Uterus (tissue), 4 donors: ENCODE measurements at regions of chr19 and their contacts with region 1.

Region 1: GRCh38 chr19:2977001-2977685 is at the start of gene TLE6:
- DNase-seq: peak; percentile 95 to 96
- H3K4me3 ChIP-seq: peak within 1 kb of the TSS; percentile 25 to 34
- H3K27ac ChIP-seq: peak within 1 kb of the TSS; percentile 20 to 67
- H3K4me1 ChIP-seq: peaks cover 16 to 26% of the 10 kb centered on the region in 2 donors
- H3K27me3 ChIP-seq: no peaks in the 10 kb centered on the region
- CTCF ChIP-seq: no peak
- POLR2A ChIP-seq: no peak
- total RNA-seq, gene TLE6: 0.46 to 3.5 (median 1.1) TPM in 3 of 4 donors, not detected in the other

Region 2: DNA sequence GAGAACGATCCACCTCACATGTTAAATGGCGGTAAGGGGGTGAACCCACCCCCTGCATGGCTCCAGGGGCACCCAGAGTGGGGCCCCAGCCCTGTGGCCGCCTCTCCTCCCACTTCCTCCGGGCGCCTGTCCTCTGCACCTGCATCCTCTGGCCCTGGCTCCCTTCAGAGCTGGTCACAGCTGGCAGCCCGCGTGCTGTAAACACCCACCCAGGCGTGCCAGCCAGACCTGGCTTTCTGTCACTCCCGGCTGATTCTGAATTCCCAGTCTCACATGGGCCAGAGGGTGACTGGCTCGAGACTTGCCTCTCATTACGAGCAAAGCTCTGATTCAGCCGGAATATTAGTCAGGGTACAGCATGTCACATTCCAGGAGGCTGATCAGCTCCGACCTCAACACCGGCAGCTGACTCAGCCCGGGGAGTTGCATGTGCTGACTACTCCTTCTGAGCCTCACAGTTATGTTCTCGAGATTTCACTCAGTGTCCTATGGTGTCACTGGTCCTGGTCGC is 349.8 kb before region 1 on chr19:
- intact Hi-C with region 1: no loop called
- DNase-seq: peak; percentile 41 to 53
- H3K4me3 ChIP-seq: no peak overlapping the region
- H3K27ac ChIP-seq: peak overlapping the region in 1 of 2 donors; percentile 53
- H3K4me1 ChIP-seq: peaks cover 0 to 3% of the 10 kb centered on the region in 2 donors
- H3K27me3 ChIP-seq: no peaks in the 10 kb centered on the region
- CTCF ChIP-seq: no peak
- POLR2A ChIP-seq: no peak

Region 3: DNA sequence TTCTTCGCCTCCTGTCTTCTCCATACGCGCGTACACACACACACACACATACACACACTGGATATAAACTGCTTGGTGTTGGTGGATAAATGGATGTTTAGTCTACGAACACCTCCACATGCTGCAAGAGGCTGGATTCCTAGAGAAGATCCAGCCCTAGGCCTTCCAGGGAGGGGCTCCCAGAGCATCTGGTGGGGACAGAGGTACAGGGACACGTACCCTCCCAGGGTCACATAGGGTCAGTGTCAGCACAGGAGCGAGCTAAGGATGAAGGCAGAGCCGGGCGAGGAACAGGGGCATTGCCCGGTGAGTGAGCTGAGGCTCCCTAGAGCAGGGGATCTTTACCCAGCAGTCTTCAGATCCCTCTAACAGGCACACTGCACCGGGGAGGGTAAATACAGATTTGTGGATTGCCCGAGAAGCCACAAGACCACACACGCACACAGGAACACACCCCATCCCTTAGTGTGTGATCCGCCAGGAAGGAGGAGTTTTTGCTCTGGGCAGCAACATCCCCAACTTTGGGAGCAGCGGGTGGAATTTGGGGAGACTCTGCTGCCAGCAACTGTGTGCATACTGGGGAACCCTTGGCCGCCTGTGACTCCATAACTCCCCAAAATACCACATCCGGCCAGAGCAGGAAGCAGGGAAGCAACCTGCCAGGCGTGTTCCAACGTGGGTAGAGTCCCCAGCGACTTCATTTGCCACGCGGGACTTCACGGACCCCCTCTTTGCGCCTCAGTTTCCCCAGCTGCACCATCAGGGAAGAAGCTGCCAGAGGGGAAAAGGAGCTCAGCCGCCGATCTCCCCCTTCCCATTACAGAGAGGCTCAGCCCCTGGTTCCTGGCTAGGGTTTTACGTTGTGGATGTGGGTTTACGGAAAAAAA is 57.8 kb after region 1 on chr19:
- intact Hi-C with region 1: loop called (anchors 5 kb)
- DNase-seq: peak; percentile 47 to 59
- H3K4me3 ChIP-seq: peak overlapping the region; percentile 55 to 56
- H3K27ac ChIP-seq: peak overlapping the region; percentile 71 to 96
- H3K4me1 ChIP-seq: peaks cover 0 to 8% of the 10 kb centered on the region in 2 donors
- H3K27me3 ChIP-seq: no peaks in the 10 kb centered on the region
- CTCF ChIP-seq: no peak
- POLR2A ChIP-seq: no peak

Region 4: GRCh38 chr19:3094601-3095437 is 117.7 kb after region 1 on chr19:
- intact Hi-C with region 1: no loop called
- DNase-seq: no peak
- H3K4me3 ChIP-seq: peak overlapping the region; percentile 74 to 95
- H3K27ac ChIP-seq: peak overlapping the region; percentile 54 to 57
- H3K4me1 ChIP-seq: peaks cover 0 to 30% of the 10 kb centered on the region in 2 donors
- H3K27me3 ChIP-seq: no peaks in the 10 kb centered on the region
- CTCF ChIP-seq: no peak
- POLR2A ChIP-seq: no peak

Region 5: GRCh38 chr19:3398114-3398899 is 421.2 kb after region 1 on chr19:
- intact Hi-C with region 1: no loop called
- DNase-seq: peak; percentile 82 to 85
- H3K4me3 ChIP-seq: peak overlapping the region; percentile 25 to 38
- H3K27ac ChIP-seq: peak overlapping the region; percentile 98 to 100
- H3K4me1 ChIP-seq: peaks cover 5 to 17% of the 10 kb centered on the region in 2 donors
- H3K27me3 ChIP-seq: no peaks in the 10 kb centered on the region
- CTCF ChIP-seq: no peak
- POLR2A ChIP-seq: peak in 1 of 2 donors; percentile 23